AG04449 (cell line): ENCODE measurements at regions of chr11 and their contacts with region 1.

Region 1: DNA sequence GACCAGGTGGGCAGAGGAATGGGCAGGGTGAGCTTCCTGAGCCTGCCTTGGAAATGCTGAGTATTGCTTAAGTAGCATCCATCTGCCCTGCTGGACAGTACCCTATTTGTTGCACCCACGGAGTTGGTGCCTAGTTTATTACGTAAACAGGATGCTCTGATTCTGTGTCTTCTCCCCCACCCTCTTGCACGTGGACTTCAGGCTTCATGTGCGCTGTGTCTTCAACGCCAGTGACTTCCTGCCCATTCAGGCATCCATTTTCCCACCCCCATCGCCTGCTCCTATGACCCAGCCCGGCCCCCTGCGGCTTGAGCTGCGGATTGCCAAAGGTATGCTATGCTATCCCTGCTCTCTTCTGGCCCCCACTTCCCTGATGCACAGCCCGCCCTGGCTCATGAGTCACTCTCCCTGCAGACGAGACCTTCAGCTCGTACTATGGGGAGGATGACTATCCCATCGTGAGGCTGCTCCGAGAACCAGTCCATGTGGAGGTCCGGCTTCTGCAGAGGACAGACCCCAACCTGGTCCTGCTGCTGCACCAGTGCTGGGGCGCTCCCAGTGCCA is 5.7 kb downstream of the ZP1 start:
- DNase-seq: peak; percentile 40
- H3K4me3 ChIP-seq: no peak overlapping the region
- CTCF ChIP-seq: no peak

Region 2: DNA sequence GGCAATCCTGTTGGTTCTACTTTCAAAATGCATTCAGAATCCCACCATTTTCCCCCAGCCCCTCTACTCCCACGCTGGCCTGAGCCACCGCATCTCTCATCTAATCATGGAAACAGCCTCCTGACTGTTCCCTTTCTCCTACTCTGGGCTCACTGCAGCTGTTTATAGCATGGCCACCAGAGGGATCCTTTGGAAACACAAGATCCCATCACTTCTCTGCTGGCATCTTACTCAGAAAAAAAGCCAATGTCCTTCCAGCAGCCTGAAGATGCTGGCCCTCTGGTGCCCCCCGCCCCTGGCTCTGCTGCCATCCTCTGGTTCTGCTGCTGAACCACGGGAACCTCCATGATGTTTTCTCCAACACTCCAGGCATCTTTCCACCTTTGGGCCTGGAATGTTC is 162.6 kb before region 1 on chr11:
- CTCF ChIA-PET with region 1: no interaction called
- POLR2A ChIA-PET with region 1: no interaction called
- DNase-seq: no peak
- H3K4me3 ChIP-seq: no peak overlapping the region
- CTCF ChIP-seq: no peak

Region 3: GRCh38 chr11:60797846-60798630 is 75.0 kb before region 1 on chr11:
- CTCF ChIA-PET with region 1: no interaction called
- POLR2A ChIA-PET with region 1: no interaction called
- DNase-seq: no peak
- H3K4me3 ChIP-seq: no peak overlapping the region
- CTCF ChIP-seq: no peak

Region 4: DNA sequence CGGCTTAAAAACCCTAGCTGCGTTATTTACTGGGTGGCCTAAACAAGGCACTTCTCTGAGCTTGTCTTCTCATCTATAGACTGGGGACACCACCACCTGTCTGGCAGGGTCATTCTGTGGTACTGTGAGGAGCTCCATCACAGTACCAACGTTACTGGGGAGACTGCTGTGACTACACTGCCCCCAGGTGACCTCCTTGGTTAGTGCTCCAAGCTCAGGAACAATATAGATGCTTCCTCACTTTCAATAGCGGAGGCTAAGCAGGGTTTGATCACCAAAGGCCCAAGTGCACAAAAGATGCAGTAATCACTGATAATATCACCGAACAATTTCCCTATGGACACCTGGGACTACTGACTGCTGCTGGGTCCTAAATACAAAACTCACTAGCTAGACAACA is 14.5 kb after region 1 on chr11:
- CTCF ChIA-PET with region 1: interaction called, 15 read pairs
- POLR2A ChIA-PET with region 1: interaction called, 4 read pairs
- DNase-seq: no peak
- H3K4me3 ChIP-seq: no peak overlapping the region
- CTCF ChIP-seq: peak; percentile 72

Region 5: DNA sequence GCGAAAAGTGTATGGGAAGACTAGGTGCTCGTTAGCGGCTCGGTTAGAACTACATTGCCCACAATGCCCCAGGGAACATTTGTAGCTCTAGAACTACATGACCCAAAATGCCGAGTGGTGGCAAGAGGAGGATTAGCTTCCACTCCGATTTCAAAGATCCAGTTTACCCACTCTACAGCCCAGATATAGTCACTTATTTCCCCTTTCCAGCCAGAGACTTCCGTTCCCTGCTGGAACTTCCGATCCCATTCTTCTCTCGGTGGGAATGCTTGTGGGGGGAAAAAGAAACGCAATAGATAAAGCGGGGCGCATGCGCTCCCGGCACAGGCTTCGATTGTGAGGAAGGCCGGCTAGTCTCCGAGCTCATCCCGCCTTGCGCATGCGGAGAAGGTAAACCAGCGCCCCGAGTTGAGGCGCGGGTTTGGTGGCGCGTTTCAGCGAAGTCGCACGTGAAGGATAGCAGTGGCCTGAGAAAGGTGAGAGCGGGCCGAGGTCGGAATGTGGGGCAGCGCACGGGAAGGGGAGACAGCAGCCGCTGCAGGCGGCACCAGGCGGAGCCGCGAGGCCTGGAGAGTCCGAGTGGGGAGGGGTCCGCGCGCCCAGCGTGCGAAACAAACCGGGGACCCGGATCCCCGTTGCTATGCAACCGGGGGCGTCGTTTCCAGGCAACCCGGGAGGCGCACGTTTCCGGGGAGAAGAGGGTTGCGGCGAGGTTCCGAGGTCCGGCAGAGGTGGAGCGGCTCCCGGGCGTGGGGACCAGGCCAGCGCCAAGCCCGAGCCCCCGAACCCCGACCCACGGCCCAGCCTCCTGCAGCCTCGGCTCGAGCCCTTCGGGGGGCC is 41.0 kb after region 1 on chr11 and contains the start of gene TMEM109:
- CTCF ChIA-PET with region 1: no interaction called
- POLR2A ChIA-PET with region 1: no interaction called
- DNase-seq: peak; percentile 51
- H3K4me3 ChIP-seq: peak within 1 kb of the TSS; percentile 86
- CTCF ChIP-seq: no peak

Region 6: DNA sequence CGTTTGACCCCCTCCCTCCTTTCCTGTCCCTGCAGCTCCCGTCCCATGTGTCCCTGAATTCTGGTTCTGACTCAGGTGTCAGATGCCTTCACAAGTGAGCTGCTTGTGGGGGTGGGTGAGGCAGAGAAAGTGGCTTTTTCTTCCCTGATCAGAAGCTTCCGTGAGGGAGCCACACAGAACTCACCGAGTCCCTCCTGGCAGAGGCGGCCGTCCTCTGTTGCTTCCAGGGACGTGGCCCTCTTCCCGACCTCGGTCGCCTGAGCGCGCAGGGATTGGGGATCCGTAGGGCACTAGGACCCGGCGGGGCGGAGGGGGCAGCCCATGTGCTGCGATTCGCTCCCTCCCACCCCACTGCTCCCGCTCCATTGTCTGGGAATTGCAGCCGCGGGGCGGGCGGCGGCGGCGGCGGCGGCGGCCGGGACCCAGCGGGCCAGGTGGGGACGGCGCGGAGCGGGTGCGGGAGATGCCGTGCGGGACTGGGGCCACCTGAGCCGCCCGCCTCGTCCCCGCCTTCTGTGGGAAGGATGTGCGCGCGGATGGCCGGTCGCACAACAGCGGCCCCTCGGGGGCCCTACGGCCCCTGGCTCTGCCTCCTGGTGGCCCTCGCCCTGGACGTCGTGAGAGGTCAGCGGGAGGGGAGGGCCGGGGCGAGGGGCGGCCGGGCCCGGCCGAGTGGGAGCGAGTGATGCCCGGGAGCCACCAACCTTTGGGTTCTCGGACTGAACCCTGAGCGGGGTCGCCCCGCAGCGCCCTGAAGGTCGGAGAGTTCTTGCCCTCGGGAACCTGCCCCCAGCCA is 51.3 kb after region 1 on chr11 and contains the start of gene TMEM132A:
- CTCF ChIA-PET with region 1: no interaction called
- POLR2A ChIA-PET with region 1: no interaction called
- DNase-seq: no peak
- H3K4me3 ChIP-seq: peak within 1 kb of the TSS; percentile 67
- CTCF ChIP-seq: no peak